ENCODE measurements at regions of chr4 and their contacts with region 1.

Region 1: DNA sequence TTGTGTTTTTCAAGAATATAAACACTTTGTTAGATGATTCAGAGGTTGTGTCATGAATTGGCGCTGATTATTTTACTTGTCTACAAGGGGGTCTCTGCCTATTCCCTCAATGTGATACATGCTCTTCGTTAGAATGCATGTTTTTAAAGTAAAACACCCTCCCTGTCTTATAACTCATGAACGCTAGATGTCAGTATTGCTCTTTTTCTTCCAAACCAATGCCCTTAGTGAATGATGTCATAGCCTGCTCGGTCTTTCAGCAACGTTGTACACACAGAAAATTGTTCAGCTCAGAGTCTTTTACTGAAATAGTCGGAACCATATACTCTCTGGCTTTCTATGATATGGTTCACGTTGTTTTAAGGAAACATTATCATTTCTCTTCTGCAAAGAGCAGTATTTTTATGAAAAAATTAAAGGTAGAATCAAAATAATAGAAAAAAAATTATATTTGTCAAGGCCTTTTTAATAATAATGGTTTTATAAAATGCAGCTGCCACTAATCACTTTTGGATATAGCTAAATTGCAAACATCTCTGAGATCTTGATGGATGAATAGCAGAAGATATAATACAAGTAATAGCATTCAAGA is 292.9 kb downstream of the TLL1 start:
- DNase-seq: peak; percentile 59
- H3K4me3 ChIP-seq: no peak overlapping the region
- H3K27ac ChIP-seq: no peak overlapping the region
- H3K4me1 ChIP-seq: no peaks in the 10 kb centered on the region
- H3K27me3 ChIP-seq: peaks cover 3% of the 10 kb centered on the region
- CTCF ChIP-seq: peak; percentile 74 to 82

Region 2: DNA sequence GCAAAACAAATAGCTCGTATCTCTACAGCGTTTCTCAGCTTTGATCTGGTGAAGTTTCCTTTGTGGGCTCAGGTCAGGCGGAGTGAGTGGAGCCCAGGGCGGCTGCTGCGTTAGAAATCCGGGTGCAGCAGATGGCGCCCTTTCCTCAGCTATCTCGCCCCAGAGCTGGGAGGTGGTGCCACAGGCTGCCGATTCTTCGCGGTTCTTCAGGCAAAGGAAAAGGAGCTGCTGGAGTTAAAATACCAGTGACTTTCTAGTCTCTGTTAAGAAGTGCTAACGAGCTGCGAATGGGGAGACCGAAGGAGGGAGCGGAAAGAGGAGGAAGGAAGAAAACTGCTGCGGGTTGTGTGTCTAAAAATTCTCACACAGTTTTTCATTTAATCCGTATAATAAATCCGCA is 672.6 kb before region 1 on chr4:
- CTCF ChIA-PET with region 1: no interaction called
- dilution Hi-C with region 1: no loop called
- in situ Hi-C with region 1: no loop called
- intact Hi-C with region 1: loop called (anchors 2 kb)
- DNase-seq: peak; percentile 49
- H3K4me3 ChIP-seq: peak overlapping the region in 1 of 3 experiments; percentile 8
- H3K27ac ChIP-seq: no peak overlapping the region
- H3K4me1 ChIP-seq: no peaks in the 10 kb centered on the region
- H3K27me3 ChIP-seq: no peaks in the 10 kb centered on the region
- CTCF ChIP-seq: peak; percentile 72 to 90

Region 3: DNA sequence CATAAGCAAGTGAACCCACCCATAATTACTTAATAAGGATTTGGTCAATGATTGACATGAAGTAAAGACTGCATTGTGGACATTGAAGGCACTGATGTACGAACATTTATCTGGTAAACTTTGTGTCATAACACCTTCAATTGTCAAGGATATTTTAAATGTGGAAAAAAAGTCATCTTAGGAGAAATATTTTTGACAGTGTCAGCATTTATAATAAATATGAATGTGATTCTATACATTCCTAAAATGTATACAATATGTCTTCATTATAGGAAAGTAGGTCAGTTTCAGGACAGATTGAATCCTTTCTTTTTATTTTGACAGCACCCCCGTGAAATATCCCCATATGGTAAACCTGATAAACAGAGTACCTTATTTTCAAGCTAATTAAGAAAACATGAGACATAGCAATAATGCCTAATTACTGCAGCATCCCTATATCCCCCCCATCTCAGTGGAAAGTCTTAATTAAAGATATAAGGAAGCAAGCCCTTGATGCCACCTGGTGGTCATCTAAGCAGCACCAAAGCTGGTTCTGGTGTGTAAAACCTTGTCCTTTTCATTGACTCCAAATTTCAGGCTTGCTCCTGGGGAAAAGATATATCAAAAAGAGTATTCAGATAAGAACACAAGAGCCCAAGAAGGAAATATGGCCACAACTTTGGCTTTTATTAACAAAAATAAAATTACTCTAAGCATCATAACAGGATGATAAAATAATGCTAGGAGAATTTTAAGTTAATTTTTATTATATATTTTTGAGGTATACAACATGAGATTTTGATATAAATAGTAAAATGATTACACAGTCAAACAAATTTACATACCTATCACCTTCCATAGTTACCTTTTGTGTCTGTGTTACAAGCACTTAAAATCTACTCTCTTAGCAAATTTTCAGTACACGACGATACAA is 86.8 kb after region 1 on chr4:
- CTCF ChIA-PET with region 1: no interaction called
- dilution Hi-C with region 1: no loop called
- in situ Hi-C with region 1: no loop called
- intact Hi-C with region 1: loop called (anchors 2 kb)
- DNase-seq: peak; percentile 8
- H3K4me3 ChIP-seq: no peak overlapping the region
- H3K27ac ChIP-seq: no peak overlapping the region
- H3K4me1 ChIP-seq: no peaks in the 10 kb centered on the region
- H3K27me3 ChIP-seq: peaks cover 1% of the 10 kb centered on the region
- CTCF ChIP-seq: peak; percentile 60 to 67

Region 4: DNA sequence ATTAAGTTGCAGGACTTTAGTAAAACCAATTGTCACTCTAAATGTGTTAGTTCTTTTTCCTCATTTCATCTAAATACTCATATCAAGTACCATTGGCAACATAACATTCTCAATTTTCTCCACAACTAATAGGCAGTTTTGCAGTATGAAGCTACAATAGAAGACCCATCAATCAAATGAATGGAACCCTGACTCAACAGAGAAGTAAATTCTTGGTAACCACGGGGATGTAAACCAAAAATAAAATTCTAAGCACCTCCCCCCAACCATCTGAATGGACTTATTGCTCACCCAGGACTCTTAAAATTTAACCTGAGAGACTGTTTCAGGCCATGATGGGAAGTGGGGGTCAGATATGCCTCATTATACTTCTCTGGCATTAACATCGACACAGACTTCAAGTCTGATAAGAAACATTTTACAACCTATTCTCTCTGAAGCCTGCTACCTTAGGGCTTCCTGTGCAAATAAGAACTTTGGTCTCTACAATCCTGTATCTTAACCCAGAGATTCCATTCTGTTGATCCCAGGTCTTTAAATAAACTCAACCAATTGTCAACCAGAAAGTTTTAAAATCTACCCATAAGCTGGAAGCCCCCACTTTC is 328.0 kb after region 1 on chr4:
- CTCF ChIA-PET with region 1: no interaction called
- dilution Hi-C with region 1: no loop called
- in situ Hi-C with region 1: no loop called
- intact Hi-C with region 1: loop called (anchors 10 kb)
- DNase-seq: peak; percentile 17
- H3K4me3 ChIP-seq: no peak overlapping the region
- H3K27ac ChIP-seq: no peak overlapping the region
- H3K4me1 ChIP-seq: no peaks in the 10 kb centered on the region
- H3K27me3 ChIP-seq: no peaks in the 10 kb centered on the region
- CTCF ChIP-seq: no peak

Region 5: DNA sequence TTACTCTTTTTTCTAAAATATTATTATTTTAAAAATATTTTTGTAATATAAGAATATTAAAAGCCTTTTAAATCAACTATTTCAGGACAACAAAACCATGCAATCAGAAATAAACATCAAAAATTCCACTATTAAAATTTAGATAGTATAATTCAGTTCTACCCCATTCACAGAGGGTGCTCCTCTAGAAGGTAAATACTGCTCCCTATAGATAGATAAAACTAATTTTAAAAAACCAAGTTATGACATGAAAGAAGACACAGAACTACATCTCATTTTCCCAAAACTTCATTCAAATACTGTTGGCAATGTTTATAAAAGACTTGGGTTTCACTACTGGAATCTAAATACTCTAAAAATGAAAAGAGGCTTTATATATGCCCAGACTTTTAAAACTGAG is 849.0 kb after region 1 on chr4:
- CTCF ChIA-PET with region 1: no interaction called
- dilution Hi-C with region 1: no loop called
- in situ Hi-C with region 1: loop called in 1 of 2 experiments (anchors 25 kb)
- intact Hi-C with region 1: loop called (anchors 2 kb)
- DNase-seq: no peak
- H3K4me3 ChIP-seq: no peak overlapping the region
- H3K27ac ChIP-seq: no peak overlapping the region
- H3K4me1 ChIP-seq: no peaks in the 10 kb centered on the region
- H3K27me3 ChIP-seq: no peaks in the 10 kb centered on the region
- CTCF ChIP-seq: no peak

Region 6: GRCh38 chr4:167290678-167291077 is 1124.8 kb after region 1 on chr4:
- CTCF ChIA-PET with region 1: no interaction called
- dilution Hi-C with region 1: no loop called
- in situ Hi-C with region 1: no loop called
- intact Hi-C with region 1: loop called (anchors 10 kb)
- DNase-seq: peak; percentile 1
- H3K4me3 ChIP-seq: no peak overlapping the region
- H3K27ac ChIP-seq: no peak overlapping the region
- H3K4me1 ChIP-seq: no peaks in the 10 kb centered on the region
- H3K27me3 ChIP-seq: no peaks in the 10 kb centered on the region
- CTCF ChIP-seq: peak; percentile 27 to 50